Left cardiac atrium (tissue), 4 donors: ENCODE measurements at regions of chr4 and their contacts with region 1.

Region 1: DNA sequence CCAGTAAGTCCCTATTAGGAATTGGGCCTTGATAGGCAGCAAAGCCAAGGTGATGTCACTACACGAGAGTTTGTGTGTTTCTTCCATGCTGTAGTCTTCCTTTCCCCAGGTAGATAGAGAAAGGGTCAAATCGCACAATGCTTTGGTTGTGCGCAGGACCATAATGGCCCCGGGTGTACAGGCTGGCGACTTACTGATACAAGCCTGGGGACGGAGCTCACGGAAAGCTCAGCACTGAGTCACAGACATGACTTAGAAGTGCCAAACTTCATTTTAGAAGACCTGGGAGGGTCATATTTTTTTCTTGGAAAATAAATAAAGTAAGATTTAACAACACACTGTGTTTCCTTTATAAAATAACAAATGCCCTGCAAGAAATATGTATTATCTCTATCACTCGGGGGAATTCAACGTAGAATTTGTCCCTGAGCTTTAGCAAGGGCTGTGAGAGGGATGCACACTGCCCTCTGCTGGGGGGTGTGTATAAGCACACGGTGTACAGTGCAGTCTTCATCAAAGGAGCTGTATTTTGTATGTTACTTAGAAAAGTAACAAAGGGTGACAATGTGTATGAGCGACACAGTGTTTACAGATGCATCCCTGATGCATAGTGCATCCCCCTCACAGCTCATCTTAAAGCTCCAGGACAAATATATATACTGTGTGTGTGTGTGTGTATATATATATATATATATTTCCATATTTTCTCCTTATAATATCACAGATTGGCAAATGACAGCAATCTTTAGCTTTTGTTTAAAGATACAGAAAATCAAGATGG is 254.5 kb upstream of the VEGFC start:
- DNase-seq: peak; percentile 52
- ATAC-seq: peak; percentile 77 to 87

Region 2: GRCh38 chr4:176377780-176378179 is 669.5 kb before region 1 on chr4:
- intact Hi-C with region 1: loop called (anchors 2 to 10 kb)
- DNase-seq: no peak
- ATAC-seq: no peak

Region 3: DNA sequence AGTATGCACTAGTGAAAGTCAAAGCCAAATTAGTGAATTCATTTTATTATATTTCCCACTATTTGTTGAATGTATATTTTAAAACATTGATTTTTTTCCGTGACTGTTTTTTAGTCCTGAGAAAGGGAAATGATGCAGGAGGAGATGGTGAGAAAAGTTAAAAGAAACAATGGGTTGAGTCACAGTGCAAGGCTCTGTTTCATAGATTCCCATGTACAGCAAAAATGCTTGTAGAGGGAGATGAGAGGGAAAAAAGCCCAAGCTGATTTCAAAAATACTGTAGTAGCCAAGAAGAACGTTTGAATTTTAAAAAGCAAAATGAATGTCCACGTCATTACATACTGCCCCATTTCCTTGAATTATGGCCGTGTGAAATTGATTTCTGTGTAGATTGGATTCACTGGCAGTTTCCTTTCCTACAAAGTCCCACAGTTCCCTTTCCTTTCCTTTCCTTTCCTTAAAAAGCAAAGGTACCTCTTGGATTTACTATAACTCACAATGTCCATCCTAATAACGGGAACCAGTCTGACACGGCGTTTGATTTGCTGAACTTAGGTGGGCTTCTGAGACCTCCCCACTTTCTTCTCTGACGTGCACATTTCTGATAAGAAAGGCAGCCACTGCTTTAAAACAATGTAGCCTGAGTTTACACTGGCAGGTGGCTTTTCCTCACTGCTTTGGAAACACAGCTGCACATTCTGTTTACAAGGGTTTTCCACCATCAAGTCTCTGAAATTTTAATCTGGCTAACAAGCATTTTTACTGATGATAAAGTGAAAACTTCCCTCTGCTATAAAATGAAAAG is 663.8 kb before region 1 on chr4:
- intact Hi-C with region 1: loop called (anchors 2 to 10 kb)
- DNase-seq: no peak
- ATAC-seq: no peak

Region 4: DNA sequence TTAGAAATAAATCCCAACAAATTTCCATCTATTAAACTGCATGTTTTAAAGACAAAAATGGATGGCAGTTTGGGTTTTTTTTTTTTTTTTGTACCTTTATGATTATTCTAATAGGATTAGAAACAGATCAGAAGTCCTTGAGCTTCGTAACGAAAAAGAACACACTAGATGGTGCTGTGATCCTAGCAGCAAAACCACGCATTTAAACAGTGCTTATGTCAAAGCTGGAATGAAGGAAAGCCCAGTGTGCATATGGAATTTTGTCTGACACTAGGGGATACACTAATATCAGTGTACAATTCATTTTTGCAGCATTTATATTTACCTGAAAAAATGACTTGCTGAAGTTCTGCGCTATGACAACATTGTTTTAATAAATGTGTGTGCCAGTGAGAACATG is 483.7 kb before region 1 on chr4:
- intact Hi-C with region 1: loop called in 1 of 2 experiments (anchors 10 kb)
- DNase-seq: no peak
- ATAC-seq: no peak

Region 5: DNA sequence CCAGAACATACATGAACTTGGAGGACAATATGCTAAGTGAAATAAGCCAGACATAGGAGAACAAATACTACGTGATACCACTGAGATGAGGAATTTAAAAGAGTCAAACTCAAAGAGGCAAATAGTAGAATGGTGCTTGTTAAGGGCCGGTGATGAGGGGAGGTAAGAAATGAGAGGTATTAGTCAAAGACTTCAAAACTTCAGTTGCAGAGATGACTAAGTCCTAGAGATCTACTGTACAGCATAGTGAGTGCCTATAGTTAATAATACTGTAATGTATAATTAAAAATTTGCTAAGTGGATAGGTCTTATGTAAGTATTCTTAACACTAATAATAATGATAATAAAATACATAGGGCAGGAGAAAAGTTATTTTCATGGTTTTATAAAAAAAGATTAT is 127.6 kb before region 1 on chr4:
- intact Hi-C with region 1: no loop called
- DNase-seq: no peak
- ATAC-seq: no peak